Dorsolateral prefrontal cortex (tissue), 120 donors: ENCODE measurements at regions of chr12 and their contacts with region 1.

Region 1: GRCh38 chr12:712172-712863 is 40.1 kb upstream of the WNK1 start:
- DNase-seq: peak in 6 of 10 donors; percentile 44 to 79 (median 61)
- H3K4me3 ChIP-seq: peak overlapping the region in 3 of 59 donors; percentile 2 to 9 (median 4)
- H3K27ac ChIP-seq: peak overlapping the region in 58 of 59 donors; percentile 50 to 94 (median 88)
- H3K27me3 ChIP-seq: no peaks in the 10 kb centered on the region
- CTCF ChIP-seq: no peak

Region 2: DNA sequence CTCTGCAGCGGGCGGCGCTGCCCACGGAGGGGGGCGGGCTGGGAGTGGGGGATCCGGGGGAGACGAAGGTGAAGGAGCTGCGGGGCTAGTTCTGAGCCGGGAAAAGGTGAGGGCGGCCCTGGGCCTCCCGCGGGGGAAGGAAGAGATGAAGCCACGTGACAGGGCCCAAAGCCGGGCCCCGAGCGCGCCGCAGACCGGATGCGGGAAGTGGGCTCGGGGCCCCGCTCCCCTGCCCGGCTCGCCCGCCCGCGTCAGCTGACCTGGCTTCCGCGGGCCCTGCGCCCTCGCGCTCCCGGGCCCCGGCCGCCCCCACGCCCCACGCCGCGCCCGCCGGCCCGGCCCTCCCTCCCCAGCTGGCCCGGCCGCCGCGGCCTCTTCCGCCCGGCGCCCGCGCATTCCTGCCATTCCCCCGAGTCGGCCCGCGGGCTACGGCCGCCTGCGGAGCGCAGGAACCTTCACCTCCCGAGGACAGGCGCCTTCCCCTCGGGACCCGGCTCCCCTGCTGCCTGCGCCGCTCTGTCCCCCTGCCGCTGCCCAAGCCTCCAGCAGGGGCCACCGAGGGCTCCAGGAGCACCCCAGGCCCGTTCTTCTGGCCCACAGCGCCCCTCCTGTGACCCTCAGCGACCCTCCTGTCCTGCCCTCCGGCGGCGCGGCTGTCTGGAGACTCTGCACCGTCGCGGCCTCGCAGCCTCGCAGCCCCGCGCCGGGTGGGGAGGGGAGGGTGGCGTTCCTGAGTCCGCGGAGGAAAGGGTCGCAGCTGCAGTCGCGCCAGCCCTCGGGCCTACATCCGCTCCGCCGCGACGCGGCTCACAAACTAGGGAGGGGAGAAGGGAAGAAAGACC is 69.5 kb before region 1 on chr12:
- intact Hi-C with region 1: loop called in 1 of 2 experiments (anchors 10 kb)
- DNase-seq: peak; percentile 45 to 81 (median 60)
- H3K4me3 ChIP-seq: peak overlapping the region; percentile 45 to 81 (median 70)
- H3K27ac ChIP-seq: peak overlapping the region; percentile 83 to 100 (median 97)
- H3K27me3 ChIP-seq: no peaks in the 10 kb centered on the region
- CTCF ChIP-seq: peak in 32 of 56 donors; percentile 1 to 48 (median 23)